Motor neuron (in vitro differentiated cells): ENCODE measurements at regions of chr11 and their contacts with region 1.

Region 1: GRCh38 chr11:20355221-20356219 is 8.0 kb upstream of the HTATIP2 start:
- ATAC-seq: peak in 6 of 8 experiments; percentile 46 to 93 (median 77)
- H3K4me3 ChIP-seq: no peak overlapping the region
- H3K27ac ChIP-seq: no peak overlapping the region
- H3K4me1 ChIP-seq: no peaks in the 10 kb centered on the region

Region 2: DNA sequence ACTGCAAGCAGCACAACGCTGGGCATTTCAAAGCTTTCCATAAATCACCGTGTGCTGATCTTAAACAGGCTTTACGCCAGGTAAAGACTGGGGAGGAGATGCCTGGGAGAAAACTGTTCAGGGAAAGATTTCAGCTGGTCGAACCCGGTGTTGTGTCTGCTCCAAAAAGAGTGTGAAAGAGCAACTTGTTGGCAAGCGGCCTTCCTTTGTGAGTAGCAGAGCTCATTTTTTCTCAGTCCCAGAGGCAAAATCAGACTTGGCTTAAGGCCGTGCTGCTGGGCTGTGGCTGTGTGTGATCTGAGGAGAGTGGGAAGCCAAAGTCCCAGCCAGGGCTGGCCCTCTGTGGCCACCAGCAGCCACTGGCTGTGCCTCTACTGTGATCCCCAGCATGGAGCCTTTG is 1039.1 kb before region 1 on chr11:
- in situ Hi-C with region 1: no loop called
- ATAC-seq: peak in 1 of 8 experiments; percentile 58
- H3K4me3 ChIP-seq: no peak overlapping the region
- H3K27ac ChIP-seq: no peak overlapping the region
- H3K4me1 ChIP-seq: peaks cover 0 to 2% of the 10 kb centered on the region in 2 donors

Region 3: GRCh38 chr11:19938169-19938856 is 417.2 kb before region 1 on chr11:
- in situ Hi-C with region 1: loop called in 2 of 9 experiments (anchors 10 to 25 kb)
- ATAC-seq: peak in 3 of 8 experiments; percentile 62 to 89 (median 64)
- H3K4me3 ChIP-seq: no peak overlapping the region
- H3K27ac ChIP-seq: no peak overlapping the region
- H3K4me1 ChIP-seq: peaks cover 11 to 16% of the 10 kb centered on the region in 2 donors

Region 4: DNA sequence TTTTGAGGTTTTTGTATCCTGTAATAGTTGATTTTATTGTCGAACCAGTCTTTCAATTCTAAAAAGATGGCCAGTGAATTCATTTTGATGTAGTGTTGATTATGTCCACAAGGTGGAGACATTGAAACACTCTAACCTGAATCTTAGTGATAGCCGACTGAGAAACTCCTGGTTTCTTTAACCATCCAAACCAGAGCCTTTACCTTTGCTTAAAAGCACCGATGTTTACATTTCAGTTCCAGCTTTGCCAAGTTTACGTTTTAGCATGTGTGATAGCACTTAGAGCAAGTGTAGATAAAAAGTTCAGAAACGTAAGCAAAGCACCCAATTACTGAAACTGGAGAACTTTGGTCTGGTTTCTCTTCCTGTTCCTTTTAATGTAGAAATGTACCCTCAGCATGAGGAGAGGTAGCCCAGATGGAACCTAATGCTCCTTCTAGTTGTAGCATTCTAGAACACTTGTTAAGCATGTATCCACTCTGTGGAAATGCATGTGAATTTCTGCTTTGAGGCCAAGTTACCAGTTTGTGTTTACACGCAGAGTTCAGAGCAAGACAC is 403.9 kb before region 1 on chr11:
- in situ Hi-C with region 1: loop called in 2 of 9 experiments (anchors 10 to 25 kb)
- ATAC-seq: peak; percentile 12 to 45 (median 40)
- H3K4me3 ChIP-seq: no peak overlapping the region
- H3K27ac ChIP-seq: no peak overlapping the region
- H3K4me1 ChIP-seq: peaks cover 9% of the 10 kb centered on the region in 2 donors

Region 5: GRCh38 chr11:20127671-20128527 is 227.6 kb before region 1 on chr11:
- in situ Hi-C with region 1: loop called in 1 of 9 experiments (anchors 5 kb)
- ATAC-seq: peak; percentile 67 to 90 (median 86)
- H3K4me3 ChIP-seq: no peak overlapping the region
- H3K27ac ChIP-seq: no peak overlapping the region
- H3K4me1 ChIP-seq: no peaks in the 10 kb centered on the region